Endothelial cell of umbilical vein (primary cell): ENCODE measurements at regions of chr15 and their contacts with region 1.

Region 1: GRCh38 chr15:51829360-51830275 is at the start of gene TMOD3:
- DNase-seq: peak; percentile 94
- H3K4me3 ChIP-seq: peak within 1 kb of the TSS; percentile 88 to 97 (median 90)
- H3K27ac ChIP-seq: peak within 1 kb of the TSS; percentile 88
- H3K4me1 ChIP-seq: peaks cover 12% of the 10 kb centered on the region
- H3K27me3 ChIP-seq: no peaks in the 10 kb centered on the region
- CTCF ChIP-seq: peak in 1 of 2 donors; percentile 1
- POLR2A ChIP-seq: peak; percentile 91
- total RNA-seq, gene TMOD3: 63.7 and 64.3 TPM in 2 replicates

Region 2: GRCh38 chr15:51841406-51842040 is 11.9 kb after region 1 on chr15:
- CTCF ChIA-PET with region 1: interaction called, 5 read pairs
- POLR2A ChIA-PET with region 1: no interaction called
- dilution Hi-C with region 1: no loop called
- intact Hi-C with region 1: loop called (anchors 1 kb)
- DNase-seq: peak; percentile 59
- H3K4me3 ChIP-seq: no peak overlapping the region
- H3K27ac ChIP-seq: peak overlapping the region; percentile 50
- H3K4me1 ChIP-seq: peaks cover 80% of the 10 kb centered on the region
- H3K27me3 ChIP-seq: no peaks in the 10 kb centered on the region
- CTCF ChIP-seq: no peak
- POLR2A ChIP-seq: no peak